GM10248 (cell line): ENCODE measurements at regions of chr12 and their contacts with region 1.

Region 1: DNA sequence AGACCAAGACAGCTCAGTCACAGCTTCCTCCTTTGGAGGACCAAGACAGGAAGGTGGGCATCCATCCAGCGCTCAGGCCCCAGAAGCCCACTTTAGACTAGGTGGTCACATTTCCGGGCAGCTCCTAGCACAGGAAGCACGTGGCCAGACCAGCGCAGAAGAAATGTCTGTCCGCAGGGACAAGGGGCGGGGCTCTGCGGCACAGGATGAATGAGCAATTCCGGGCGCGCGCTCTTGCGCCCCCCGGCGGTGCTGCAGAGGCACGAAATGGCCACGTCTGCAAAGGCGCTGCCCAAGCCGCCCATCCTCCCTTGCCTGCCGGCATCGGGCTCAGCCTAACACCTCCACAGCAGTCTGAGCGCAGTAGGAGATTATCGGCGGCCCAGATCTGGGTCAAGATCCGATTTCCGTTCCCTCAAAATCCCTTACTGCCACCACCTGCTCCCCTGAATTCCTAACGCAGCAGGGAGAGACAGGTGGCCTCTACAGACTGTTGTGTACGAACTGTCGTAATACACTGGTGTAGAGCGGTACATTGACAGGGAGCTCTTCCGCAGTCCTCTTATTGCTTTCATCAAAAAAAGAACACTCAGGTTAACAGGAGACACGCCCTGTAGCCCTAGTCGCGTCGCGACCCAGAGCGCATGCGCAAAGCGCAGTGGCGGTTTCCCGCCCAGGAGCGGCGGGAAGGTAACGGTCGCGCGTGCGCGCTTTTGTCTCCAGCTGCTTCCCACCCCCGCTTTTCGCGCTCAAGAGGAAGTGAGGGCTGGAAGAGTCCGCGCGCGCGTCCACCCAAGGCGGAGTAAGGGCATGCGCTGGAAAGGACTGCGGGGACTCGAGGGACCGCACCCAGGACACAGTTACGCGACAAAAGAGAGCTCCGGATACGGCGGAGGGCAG is 794 bp downstream of the TUBA1B start:
- DNase-seq: peak; percentile 91
- CTCF ChIP-seq: peak; percentile 95

Region 2: GRCh38 chr12:48838048-48838447 is 292.4 kb before region 1 on chr12:
- CTCF ChIA-PET with region 1: no interaction called
- POLR2A ChIA-PET with region 1: no interaction called
- DNase-seq: no peak
- CTCF ChIP-seq: no peak

Region 3: GRCh38 chr12:48917857-48918537 is 212.4 kb before region 1 on chr12:
- CTCF ChIA-PET with region 1: no interaction called
- POLR2A ChIA-PET with region 1: no interaction called
- DNase-seq: no peak
- CTCF ChIP-seq: no peak

Region 4: GRCh38 chr12:49069507-49070346 is 60.7 kb before region 1 on chr12 and contains the start of gene RHEBL1:
- CTCF ChIA-PET with region 1: interaction called, 15 read pairs
- POLR2A ChIA-PET with region 1: interaction called, 17 read pairs
- DNase-seq: peak; percentile 99
- CTCF ChIP-seq: peak; percentile 21

Region 5: DNA sequence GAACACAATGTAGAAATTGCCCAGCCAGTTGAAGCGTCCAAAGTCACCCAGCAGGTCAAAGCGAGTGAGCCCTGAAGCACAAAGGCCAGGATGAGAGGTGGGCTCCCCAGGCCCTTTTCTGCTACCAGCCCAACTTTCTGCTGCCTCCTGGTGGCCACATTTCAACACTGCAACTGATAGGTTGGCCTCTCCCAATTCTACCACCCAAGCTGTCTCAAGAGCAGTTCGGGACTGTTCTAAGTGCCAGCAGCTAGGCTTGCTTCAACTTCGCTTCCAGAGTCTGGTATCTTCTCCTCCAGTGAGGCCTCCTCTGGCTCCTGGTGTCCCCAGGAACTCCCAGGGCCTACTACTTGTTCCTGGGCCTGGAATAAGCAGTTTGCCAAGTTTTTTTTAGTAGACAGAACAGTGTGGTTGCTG is 32.4 kb before region 1 on chr12:
- CTCF ChIA-PET with region 1: interaction called, 85 read pairs
- POLR2A ChIA-PET with region 1: interaction called, 7 read pairs
- DNase-seq: peak; percentile 69
- CTCF ChIP-seq: peak; percentile 72

Region 6: GRCh38 chr12:49161092-49161795 is 30.8 kb after region 1 on chr12:
- CTCF ChIA-PET with region 1: interaction called, 5 read pairs
- POLR2A ChIA-PET with region 1: interaction called, 16 read pairs
- DNase-seq: no peak
- CTCF ChIP-seq: no peak

Region 7: GRCh38 chr12:49232940-49233841 is 102.8 kb after region 1 on chr12:
- CTCF ChIA-PET with region 1: interaction called, 5 read pairs
- POLR2A ChIA-PET with region 1: interaction called, 11 read pairs
- DNase-seq: no peak
- CTCF ChIP-seq: no peak

Region 8: DNA sequence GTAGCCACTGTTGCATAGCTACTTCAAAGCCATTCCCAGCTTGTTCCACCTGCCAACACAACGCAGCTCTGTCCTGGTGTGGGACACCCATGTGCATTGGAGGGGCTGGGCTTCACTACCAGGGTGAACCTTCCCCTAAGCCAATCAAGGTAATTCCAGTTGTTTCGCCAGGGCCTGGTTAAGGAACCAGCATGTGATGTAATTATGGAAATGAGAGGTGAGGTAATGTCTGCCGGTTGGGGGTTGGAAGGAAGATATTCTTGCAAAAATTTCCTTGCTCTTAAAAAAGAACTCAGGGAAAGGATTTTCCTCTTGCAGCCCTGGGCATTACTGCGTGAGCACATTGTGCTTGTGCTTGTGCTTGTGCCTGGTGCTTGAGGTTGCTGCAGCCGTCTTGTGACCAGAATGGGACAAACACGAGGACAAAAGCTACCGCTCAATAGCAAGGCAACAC is 149.3 kb after region 1 on chr12:
- CTCF ChIA-PET with region 1: no interaction called
- POLR2A ChIA-PET with region 1: no interaction called
- DNase-seq: no peak
- CTCF ChIP-seq: no peak